ENCODE measurements at regions of chr5 and their contacts with region 1.

Region 1: DNA sequence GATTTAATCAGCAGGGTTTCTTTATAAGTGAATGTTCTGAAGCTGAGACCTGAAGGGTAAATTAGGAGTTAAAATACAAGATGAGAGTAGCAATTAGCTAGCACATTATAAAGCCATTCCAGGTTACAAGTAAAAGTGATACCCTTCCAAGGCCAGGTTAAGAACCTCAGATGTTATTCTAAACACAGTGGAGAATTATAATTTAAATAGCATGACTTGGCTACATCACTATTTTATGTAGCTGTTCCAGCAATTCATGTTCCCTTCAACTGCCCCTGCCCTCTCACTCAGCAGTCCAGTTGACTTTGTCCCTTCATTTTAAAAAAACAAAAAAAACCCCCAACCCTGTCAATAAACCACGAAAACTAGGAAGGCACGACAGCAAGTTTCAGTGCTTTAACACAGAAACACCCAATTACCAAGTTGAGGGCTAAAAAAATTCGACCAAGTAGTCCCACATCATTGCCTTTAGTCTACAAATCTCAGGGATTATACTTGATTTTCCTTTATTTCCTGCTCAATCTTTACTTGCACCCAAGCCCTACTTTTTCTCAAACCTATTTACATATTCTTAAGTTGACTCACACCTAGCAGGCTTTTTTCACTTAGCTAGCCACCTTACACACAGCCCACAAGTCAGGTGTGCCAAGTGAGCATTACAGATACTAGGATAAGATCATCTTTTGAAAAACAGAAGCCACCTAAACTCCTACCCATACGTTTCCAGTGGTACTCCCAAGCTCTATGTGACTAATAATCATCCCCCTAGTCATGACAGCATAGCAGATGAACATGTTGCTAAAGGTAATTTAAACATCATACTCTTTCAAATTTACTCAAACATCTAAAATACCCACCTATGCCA is 3.4 kb downstream of the RPL37 start:
- DNase-seq: no peak
- ATAC-seq: no peak
- H3K4me3 ChIP-seq: no peak overlapping the region
- H3K27ac ChIP-seq: peak overlapping the region; percentile 61
- H3K4me1 ChIP-seq: peaks cover 22% of the 10 kb centered on the region
- H3K27me3 ChIP-seq: no peaks in the 10 kb centered on the region
- CTCF ChIP-seq: no peak

Region 2: GRCh38 chr5:39005566-39006232 is 1825.9 kb before region 1 on chr5:
- CTCF ChIA-PET with region 1: no interaction called
- POLR2A ChIA-PET with region 1: interaction called, 14 read pairs
- in situ Hi-C with region 1: no loop called
- intact Hi-C with region 1: no loop called
- DNase-seq: no peak
- ATAC-seq: 0 out of 2 replicates have a peak, but pooled peaks have one; percentile 63
- H3K4me3 ChIP-seq: no peak overlapping the region
- H3K27ac ChIP-seq: no peak overlapping the region
- H3K4me1 ChIP-seq: no peaks in the 10 kb centered on the region
- H3K27me3 ChIP-seq: no peaks in the 10 kb centered on the region
- CTCF ChIP-seq: peak; percentile 60